ENCODE measurements at regions of chr17 and their contacts with region 1.

Region 1: DNA sequence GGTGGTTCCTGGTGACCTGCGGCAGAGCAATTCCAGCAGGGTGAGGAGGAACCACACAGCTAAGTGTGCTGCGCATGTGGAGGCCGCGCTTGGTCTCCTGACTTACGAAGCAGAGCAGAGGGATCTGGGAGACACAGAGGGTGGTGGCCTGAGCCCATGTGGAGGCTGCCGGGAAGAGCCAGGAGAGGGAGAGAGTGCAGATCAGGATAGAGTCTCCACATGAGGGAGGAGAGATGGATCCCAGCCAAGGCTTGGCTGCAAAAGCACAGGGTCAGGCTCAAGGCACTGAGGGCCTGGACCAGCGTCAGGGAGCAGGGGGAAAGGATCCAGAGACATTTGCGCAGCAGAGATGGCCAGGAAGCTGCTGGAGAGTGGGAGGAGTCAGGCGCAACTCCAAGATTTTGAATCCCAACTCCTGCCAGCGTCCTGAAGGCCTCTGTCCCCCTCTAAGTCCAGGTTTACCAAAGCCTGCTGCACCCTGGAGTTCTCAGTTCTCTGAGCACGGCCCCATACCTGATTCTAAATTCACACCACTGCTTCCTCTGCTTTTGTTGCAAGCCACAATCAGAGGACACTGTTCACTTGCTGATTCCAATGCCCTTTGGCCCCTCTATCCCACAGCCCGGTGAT is 11.3 kb upstream of the MLLT6 start:
- DNase-seq: peak; percentile 94 to 98 (median 97)
- ATAC-seq: peak; percentile 97 to 98
- H3K4me3 ChIP-seq: no peak overlapping the region
- H3K27ac ChIP-seq: peak overlapping the region; percentile 87
- H3K4me1 ChIP-seq: peaks cover 9% of the 10 kb centered on the region
- H3K27me3 ChIP-seq: no peaks in the 10 kb centered on the region

Region 2: DNA sequence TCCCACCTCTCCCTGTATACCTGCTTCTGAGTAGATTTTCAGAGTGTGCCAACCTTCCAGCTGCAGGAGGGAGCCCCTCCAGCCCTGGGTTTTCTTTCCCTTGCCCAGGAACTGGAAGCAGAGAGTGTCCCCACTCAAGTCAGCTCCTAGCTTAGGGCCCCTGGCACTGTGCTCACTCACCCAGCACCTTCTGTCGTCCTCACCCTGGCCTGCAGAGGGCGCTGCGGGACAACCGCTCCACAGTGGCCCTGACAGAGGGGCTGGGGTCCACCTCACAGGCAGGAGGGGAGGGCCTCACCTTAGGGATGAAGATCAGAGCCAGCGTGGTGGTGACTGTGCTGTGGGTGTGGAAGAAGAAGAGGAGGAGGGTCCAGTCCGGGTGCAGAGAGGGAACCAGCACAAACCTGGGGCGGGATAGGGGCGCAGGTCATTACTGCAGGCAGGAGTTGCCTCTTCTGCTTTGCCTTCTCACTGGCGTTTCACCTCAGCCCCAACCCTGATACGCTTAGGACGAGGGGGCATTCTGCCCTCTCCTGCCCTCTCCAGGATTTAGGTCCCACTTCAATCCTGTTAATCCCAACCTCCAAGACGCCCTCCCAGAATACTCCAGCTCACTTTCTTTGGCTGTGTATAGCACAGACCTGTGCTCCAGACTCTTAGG is 360.1 kb before region 1 on chr17:
- intact Hi-C with region 1: no loop called
- DNase-seq: no peak
- ATAC-seq: peak in 1 of 2 donors; percentile 17
- H3K4me3 ChIP-seq: no peak overlapping the region
- H3K27ac ChIP-seq: no peak overlapping the region
- H3K4me1 ChIP-seq: no peaks in the 10 kb centered on the region
- H3K27me3 ChIP-seq: no peaks in the 10 kb centered on the region

Region 3: DNA sequence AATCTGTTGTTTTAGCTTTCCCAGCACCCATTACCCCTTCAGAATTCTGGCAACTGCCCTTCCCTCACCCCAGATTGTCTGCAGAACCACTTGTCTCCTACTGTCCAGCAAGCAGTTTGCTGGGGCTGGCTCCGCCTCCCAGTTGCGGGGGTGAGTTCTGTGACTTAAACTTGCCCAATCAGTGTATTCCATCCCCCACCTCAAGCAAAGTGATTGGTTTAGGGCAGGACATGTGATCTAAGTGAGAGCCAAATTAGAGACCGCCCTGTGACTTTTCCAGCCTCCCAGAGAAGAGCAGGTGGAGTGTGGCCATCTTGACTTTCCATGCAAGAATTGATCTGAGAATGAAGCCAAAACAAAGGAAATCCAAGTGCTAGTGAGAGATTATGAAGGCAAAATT is 65.4 kb before region 1 on chr17:
- intact Hi-C with region 1: no loop called
- DNase-seq: no peak
- ATAC-seq: no peak
- H3K4me3 ChIP-seq: no peak overlapping the region
- H3K27ac ChIP-seq: no peak overlapping the region
- H3K4me1 ChIP-seq: no peaks in the 10 kb centered on the region
- H3K27me3 ChIP-seq: no peaks in the 10 kb centered on the region

Region 4: DNA sequence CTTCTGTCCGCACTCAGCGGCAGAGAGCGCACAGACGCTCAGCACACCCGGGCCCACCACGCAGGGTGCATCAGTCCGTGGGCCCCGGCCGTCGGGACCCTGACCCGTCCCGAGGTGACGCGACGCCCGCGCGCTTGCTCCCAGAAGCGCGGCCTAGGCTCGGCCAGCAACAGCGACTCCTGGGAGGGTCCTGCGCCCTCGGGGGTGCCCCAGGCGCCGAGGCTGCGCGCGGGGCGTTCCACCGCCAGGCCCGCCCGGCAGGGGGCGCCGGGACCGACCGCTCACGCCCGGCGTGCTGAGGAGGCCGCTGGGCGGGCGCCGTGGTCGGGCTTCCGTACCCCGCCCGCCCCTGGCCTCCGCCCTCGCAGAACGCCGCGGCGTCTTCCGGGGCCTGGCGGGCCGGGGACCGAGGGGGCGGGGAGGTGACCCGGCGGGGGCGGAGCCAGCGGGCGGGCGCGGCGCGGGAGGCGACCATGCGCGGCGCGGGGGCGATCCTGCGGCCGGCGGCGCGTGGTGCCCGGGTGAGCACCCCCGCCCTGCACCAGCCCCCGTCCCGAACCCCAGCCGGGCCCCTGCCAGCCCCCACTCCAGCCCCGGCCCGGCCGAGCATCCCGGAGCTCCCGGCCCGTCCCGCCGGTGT is 36.2 kb after region 1 on chr17 and contains the start of gene CISD3:
- intact Hi-C with region 1: loop called in 1 of 4 experiments (anchors 5 kb)
- DNase-seq: peak; percentile 90 to 97 (median 96)
- ATAC-seq: peak; percentile 73 to 89
- H3K4me3 ChIP-seq: peak within 1 kb of the TSS; percentile 60
- H3K27ac ChIP-seq: peak within 1 kb of the TSS; percentile 59
- H3K4me1 ChIP-seq: peaks cover 2% of the 10 kb centered on the region
- H3K27me3 ChIP-seq: no peaks in the 10 kb centered on the region
- total RNA-seq, gene CISD3: 43.7 to 74.6 (median 67.9) TPM

Region 5: GRCh38 chr17:38752119-38752929 is 58.5 kb after region 1 on chr17 and contains the start of gene PSMB3:
- intact Hi-C with region 1: no loop called
- DNase-seq: peak; percentile 98
- ATAC-seq: peak; percentile 78 to 89
- H3K4me3 ChIP-seq: peak within 1 kb of the TSS; percentile 60
- H3K27ac ChIP-seq: peak within 1 kb of the TSS; percentile 71
- H3K4me1 ChIP-seq: peaks cover 2% of the 10 kb centered on the region
- H3K27me3 ChIP-seq: no peaks in the 10 kb centered on the region
- total RNA-seq, gene PSMB3: 134 to 167 (median 146) TPM